ENCODE measurements at regions of chr16 and their contacts with region 1.

Region 1: DNA sequence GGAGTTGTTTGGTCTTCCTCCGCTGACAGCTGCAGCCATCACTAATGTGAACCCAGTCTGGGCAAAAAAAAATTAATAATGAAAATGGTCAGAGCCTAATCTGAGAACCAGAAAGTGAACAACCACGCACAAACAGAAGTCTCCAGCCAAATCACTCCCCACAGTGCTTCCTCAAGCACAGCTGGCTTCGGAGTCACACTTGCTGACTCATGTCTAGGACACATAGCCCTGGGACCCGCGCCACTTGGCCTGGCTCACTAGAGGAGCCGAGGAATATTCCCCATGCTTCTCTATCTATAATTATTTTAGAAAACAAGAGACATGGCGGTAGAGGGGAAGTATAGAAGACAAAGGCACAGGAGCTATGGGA is 109.1 kb downstream of the ZFHX3 start:
- DNase-seq: peak; percentile 92

Region 2: DNA sequence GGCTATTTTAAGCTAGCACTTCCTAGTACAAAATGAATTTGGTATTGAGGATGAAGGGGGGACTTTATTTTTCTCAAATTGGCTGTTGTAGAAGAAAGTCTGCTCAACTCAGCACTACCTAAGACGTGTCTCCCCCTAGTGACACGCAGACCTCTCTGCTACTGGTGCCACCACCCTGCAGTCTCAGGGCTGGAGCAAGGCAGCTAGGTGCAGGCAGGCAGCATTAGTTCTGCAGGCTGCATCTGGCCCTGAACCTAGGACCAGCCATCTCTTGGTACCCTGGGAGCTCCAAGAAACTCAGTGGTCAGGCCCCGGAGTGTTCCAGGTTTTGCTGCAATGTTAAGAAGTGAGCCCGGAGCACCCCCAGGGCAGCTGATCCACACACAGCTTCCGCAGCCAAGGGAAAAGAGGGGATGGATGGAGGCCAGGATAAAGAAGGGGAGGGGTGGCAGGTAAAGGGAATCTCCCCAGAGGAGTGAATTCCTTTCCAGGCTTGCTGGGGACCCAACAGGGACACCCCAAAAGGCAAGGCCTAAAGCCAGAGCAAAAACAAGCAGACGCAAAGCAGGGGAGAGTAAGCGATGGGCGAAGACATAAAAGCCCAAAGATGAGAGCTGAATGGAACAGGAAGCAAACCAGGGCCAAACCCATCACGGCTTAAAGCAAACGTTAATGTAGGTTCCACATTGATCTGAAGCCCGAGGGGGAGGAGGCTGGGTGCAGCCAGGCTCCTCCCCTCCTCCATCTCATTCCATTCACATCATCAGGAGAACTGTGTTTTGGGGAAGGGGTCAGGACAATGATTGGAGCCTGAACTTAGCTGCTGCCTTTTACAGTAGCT is 91.4 kb before region 1 on chr16:
- intact Hi-C with region 1: loop called (anchors 5 kb)
- DNase-seq: peak; percentile 75

Region 3: GRCh38 chr16:72858665-72859493 is 79.9 kb before region 1 on chr16:
- intact Hi-C with region 1: no loop called
- DNase-seq: peak; percentile 67

Region 4: GRCh38 chr16:72876221-72876620 is 62.6 kb before region 1 on chr16:
- intact Hi-C with region 1: loop called (anchors 5 kb)
- DNase-seq: peak; percentile 88

Region 5: GRCh38 chr16:72905581-72905980 is 33.2 kb before region 1 on chr16:
- intact Hi-C with region 1: no loop called
- DNase-seq: no peak

Region 6: GRCh38 chr16:73058221-73058615 is 119.4 kb after region 1 on chr16:
- intact Hi-C with region 1: loop called (anchors 5 kb)
- DNase-seq: no peak

Measured in cardiac septum (tissue), 1 donor.